B cell (primary cell): ENCODE measurements at regions of chr5 and their contacts with region 1.

Region 1: GRCh38 chr5:180071531-180072255 is at the start of gene RNF130:
- DNase-seq: peak; percentile 90
- ATAC-seq: peak; percentile 75
- H3K4me3 ChIP-seq: peak within 1 kb of the TSS; percentile 66 to 85 (median 79)
- H3K4me3 Mint-ChIP-seq: peak within 1 kb of the TSS; percentile 89
- H3K27ac ChIP-seq: peak within 1 kb of the TSS; percentile 64 to 73
- H3K27ac Mint-ChIP-seq: peak within 1 kb of the TSS; percentile 84
- H3K4me1 ChIP-seq: peaks cover 25 to 30% of the 10 kb centered on the region in 2 donors
- H3K4me1 Mint-ChIP-seq: peaks cover 32% of the 10 kb centered on the region
- H3K27me3 ChIP-seq: no peaks in the 10 kb centered on the region
- H3K27me3 Mint-ChIP-seq: peaks cover 7% of the 10 kb centered on the region
- CTCF ChIP-seq: no peak
- total RNA-seq, gene RNF130: 25.8 and 28.4 TPM in 2 replicates

Region 2: GRCh38 chr5:178204182-178204894 is 1867.4 kb before region 1 on chr5 and contains the start of gene HNRNPAB:
- CTCF ChIA-PET with region 1: no interaction called
- POLR2A ChIA-PET with region 1: no interaction called
- intact Hi-C with region 1: loop called (anchors 5 kb)
- DNase-seq: peak; percentile 99
- ATAC-seq: peak; percentile 80
- H3K4me3 ChIP-seq: peak within 1 kb of the TSS; percentile 60 to 94 (median 80)
- H3K4me3 Mint-ChIP-seq: peak within 1 kb of the TSS; percentile 99
- H3K27ac ChIP-seq: peak within 1 kb of the TSS; percentile 55 to 79
- H3K27ac Mint-ChIP-seq: peak within 1 kb of the TSS; percentile 100
- H3K4me1 ChIP-seq: peaks cover 12 to 18% of the 10 kb centered on the region in 2 donors
- H3K4me1 Mint-ChIP-seq: peaks cover 30% of the 10 kb centered on the region
- H3K27me3 ChIP-seq: no peaks in the 10 kb centered on the region
- H3K27me3 Mint-ChIP-seq: no peaks in the 10 kb centered on the region
- CTCF ChIP-seq: no peak
- total RNA-seq, gene HNRNPAB: 70.6 and 75.1 TPM in 2 replicates

Region 3: DNA sequence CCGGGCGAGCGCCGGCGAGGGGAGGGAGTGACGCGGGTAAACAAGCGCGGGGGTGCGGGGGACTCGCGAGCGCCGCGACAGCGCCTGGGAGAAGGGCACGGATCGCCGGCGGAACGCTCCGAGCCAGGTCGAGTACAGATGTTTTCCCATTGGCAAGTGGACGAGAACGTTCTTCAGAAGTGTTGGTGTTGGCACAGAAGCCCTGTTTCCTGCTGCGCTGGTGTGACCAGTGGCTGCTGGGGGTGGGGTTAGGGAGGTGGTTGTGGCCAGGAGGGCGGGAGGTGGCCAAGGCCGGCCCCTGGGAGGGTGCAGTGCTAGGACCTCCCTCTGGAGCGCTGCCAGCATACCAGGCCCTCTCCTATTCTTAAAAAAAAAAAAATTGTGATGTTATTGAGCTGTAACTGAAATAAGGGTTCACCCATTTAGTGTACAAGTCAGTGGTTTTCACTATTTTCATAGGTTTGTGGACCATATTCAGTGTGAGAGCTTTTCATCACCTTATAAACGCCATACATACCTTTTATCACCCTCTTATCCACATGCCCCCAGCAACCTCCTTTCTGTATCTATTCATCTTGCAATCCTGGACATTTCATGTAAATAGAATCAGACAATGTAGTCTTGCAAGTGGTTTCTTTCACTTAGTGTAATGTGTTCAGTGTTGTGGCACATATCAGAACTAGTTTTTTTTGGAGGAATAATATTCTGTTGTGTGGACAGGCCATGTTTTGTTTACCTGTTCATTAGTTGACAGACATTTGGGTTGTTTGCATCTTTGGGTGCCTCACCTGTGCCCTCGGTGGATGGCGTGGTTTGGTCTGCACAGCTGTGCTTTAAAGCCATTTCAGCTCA is 249.9 kb before region 1 on chr5:
- CTCF ChIA-PET with region 1: no interaction called
- POLR2A ChIA-PET with region 1: no interaction called
- intact Hi-C with region 1: loop called (anchors 5 kb)
- DNase-seq: peak; percentile 89
- ATAC-seq: peak; percentile 48
- H3K4me3 ChIP-seq: peak overlapping the region; percentile 22 to 94 (median 81)
- H3K4me3 Mint-ChIP-seq: peak overlapping the region; percentile 98
- H3K27ac ChIP-seq: peak overlapping the region; percentile 91 to 98
- H3K27ac Mint-ChIP-seq: peak overlapping the region; percentile 98
- H3K4me1 ChIP-seq: peaks cover 36 to 47% of the 10 kb centered on the region in 2 donors
- H3K4me1 Mint-ChIP-seq: peaks cover 55% of the 10 kb centered on the region
- H3K27me3 ChIP-seq: peaks cover 0 to 4% (median 0%) of the 10 kb centered on the region in 4 experiments
- H3K27me3 Mint-ChIP-seq: no peaks in the 10 kb centered on the region
- CTCF ChIP-seq: no peak

Region 4: DNA sequence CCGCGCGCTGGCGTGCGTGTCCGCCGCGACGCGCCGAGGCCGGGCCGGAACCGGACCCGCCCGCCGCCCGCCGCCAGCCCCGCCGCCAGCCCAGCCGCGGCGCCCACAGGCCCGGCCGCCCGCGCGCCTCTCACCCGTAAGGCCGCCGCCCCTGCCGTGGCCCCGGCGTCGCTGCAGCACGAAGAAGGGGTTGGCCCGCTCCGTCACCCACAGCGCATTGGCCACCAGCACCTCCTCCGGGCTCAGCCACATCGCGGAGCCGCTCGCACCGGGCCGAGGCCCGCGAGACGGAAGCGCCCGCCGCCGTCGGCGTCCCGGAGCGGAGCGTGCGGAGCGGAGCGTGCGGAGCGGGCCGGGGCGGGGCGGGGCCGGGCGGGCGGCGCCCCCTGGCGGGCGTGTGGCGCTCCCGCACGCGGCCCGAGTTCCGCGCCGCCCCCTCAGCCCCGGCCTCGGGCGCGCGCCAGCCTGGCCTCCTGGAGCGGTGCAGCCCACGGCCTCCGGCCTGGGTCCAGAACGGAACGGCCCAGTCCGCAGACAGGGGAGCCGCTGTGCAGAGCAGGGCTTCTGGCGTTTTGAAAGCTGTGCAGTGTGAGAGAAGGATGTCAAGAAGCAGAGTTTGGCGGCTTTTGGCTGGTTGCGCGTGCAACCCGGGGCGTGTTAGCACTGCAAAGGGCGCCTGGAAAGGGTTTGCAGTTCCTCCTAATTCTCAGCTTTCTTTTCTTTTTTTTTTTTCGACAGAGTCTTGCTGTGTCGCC is 163.9 kb before region 1 on chr5 and contains the start of gene TBC1D9B:
- CTCF ChIA-PET with region 1: no interaction called
- POLR2A ChIA-PET with region 1: no interaction called
- intact Hi-C with region 1: loop called (anchors 2 kb)
- DNase-seq: peak; percentile 88
- ATAC-seq: peak; percentile 88
- H3K4me3 ChIP-seq: peak within 1 kb of the TSS; percentile 47 to 61 (median 59)
- H3K4me3 Mint-ChIP-seq: peak within 1 kb of the TSS; percentile 92
- H3K27ac ChIP-seq: peak within 1 kb of the TSS in 1 of 2 donors; percentile 16
- H3K27ac Mint-ChIP-seq: peak within 1 kb of the TSS; percentile 94
- H3K4me1 ChIP-seq: peaks cover 13 to 24% of the 10 kb centered on the region in 2 donors
- H3K4me1 Mint-ChIP-seq: peaks cover 19% of the 10 kb centered on the region
- H3K27me3 ChIP-seq: no peaks in the 10 kb centered on the region
- H3K27me3 Mint-ChIP-seq: no peaks in the 10 kb centered on the region
- CTCF ChIP-seq: no peak
- total RNA-seq, gene TBC1D9B: 144 and 149 TPM in 2 replicates

Region 5: GRCh38 chr5:180007582-180007981 is 64.1 kb before region 1 on chr5:
- CTCF ChIA-PET with region 1: no interaction called
- POLR2A ChIA-PET with region 1: no interaction called
- intact Hi-C with region 1: no loop called
- DNase-seq: no peak
- ATAC-seq: no peak
- H3K4me3 ChIP-seq: no peak overlapping the region
- H3K4me3 Mint-ChIP-seq: no peak overlapping the region
- H3K27ac ChIP-seq: no peak overlapping the region
- H3K27ac Mint-ChIP-seq: no peak overlapping the region
- H3K4me1 ChIP-seq: no peaks in the 10 kb centered on the region
- H3K4me1 Mint-ChIP-seq: peaks cover 2% of the 10 kb centered on the region
- H3K27me3 ChIP-seq: no peaks in the 10 kb centered on the region
- H3K27me3 Mint-ChIP-seq: peaks cover 6% of the 10 kb centered on the region
- CTCF ChIP-seq: no peak

Region 6: GRCh38 chr5:180090098-180090768 is 18.5 kb after region 1 on chr5:
- CTCF ChIA-PET with region 1: no interaction called
- POLR2A ChIA-PET with region 1: no interaction called
- intact Hi-C with region 1: loop called (anchors 1 kb)
- DNase-seq: peak; percentile 87
- ATAC-seq: peak; percentile 95
- H3K4me3 ChIP-seq: peak overlapping the region; percentile 48 to 65 (median 58)
- H3K4me3 Mint-ChIP-seq: peak overlapping the region; percentile 90
- H3K27ac ChIP-seq: peak overlapping the region in 1 of 2 donors; percentile 56
- H3K27ac Mint-ChIP-seq: peak overlapping the region; percentile 82
- H3K4me1 ChIP-seq: peaks cover 3 to 11% of the 10 kb centered on the region in 2 donors
- H3K4me1 Mint-ChIP-seq: peaks cover 12% of the 10 kb centered on the region
- H3K27me3 ChIP-seq: peaks cover 0 to 9% (median 3%) of the 10 kb centered on the region in 4 experiments
- H3K27me3 Mint-ChIP-seq: peaks cover 10% of the 10 kb centered on the region
- CTCF ChIP-seq: peak; percentile 82

Region 7: GRCh38 chr5:180126726-180127681 is 55.3 kb after region 1 on chr5:
- CTCF ChIA-PET with region 1: no interaction called
- POLR2A ChIA-PET with region 1: no interaction called
- intact Hi-C with region 1: no loop called
- DNase-seq: peak; percentile 37
- ATAC-seq: no peak
- H3K4me3 ChIP-seq: no peak overlapping the region
- H3K4me3 Mint-ChIP-seq: no peak overlapping the region
- H3K27ac ChIP-seq: no peak overlapping the region
- H3K27ac Mint-ChIP-seq: no peak overlapping the region
- H3K4me1 ChIP-seq: no peaks in the 10 kb centered on the region
- H3K4me1 Mint-ChIP-seq: no peaks in the 10 kb centered on the region
- H3K27me3 ChIP-seq: peaks cover 0 to 4% (median 0%) of the 10 kb centered on the region in 4 experiments
- H3K27me3 Mint-ChIP-seq: peaks cover 6% of the 10 kb centered on the region
- CTCF ChIP-seq: peak; percentile 66